Cardiac septum (tissue), 1 donor: ENCODE measurements at regions of chr12 and their contacts with region 1.

Region 1: GRCh38 chr12:57846577-57847319 is at the start of gene CTDSP2:
- DNase-seq: peak; percentile 100
- total RNA-seq, gene CTDSP2: 89.2 TPM

Region 2: GRCh38 chr12:57865090-57865751 is 18.5 kb after region 1 on chr12:
- intact Hi-C with region 1: loop called (anchors 2 kb)
- DNase-seq: peak; percentile 90

Region 3: DNA sequence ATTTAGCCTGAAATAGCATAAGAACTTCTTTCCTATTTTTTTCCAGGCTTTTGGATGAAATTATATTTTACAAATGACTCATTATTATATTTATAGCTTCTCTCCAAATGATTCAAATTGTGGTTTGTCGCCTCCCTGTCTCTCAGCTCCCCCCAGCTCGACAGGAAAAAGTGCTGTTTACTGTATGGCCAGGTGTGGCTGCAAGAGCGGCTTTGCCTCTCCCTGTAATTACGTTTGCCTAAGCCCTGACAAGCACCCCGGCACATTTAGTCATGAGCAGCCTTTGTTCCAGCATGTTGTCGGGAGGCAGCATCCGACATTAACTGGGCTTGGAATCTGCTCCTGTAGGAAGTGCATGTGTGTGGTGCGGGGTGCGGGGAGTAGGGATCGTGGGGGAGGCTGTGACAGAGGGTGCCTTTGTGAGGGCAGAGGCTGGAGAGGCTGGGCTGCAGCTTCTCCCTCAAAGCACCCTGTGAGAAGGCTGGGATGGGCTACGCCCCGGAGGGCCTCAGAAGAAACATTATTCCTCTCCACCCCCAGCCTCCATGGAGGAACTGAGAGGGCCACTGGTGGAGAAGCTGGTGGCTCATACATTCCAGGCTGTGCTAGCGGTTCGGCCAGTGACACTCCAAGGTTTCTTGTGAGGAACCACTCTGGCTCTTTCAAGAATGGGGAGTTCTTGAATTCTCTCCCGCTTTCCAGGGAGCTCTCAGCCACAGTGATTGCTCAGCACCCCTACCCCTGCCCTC is 41.8 kb after region 1 on chr12:
- intact Hi-C with region 1: loop called (anchors 2 kb)
- DNase-seq: no peak